Dorsolateral prefrontal cortex (tissue), 120 donors: ENCODE measurements at regions of chr16 and their contacts with region 1.

Region 1: GRCh38 chr16:19521471-19522396 is at the start of gene GDE1:
- DNase-seq: peak; percentile 98 to 99 (median 98)
- H3K4me3 ChIP-seq: peak within 1 kb of the TSS; percentile 50 to 99 (median 92)
- H3K27ac ChIP-seq: peak within 1 kb of the TSS; percentile 18 to 99 (median 89)
- H3K27me3 ChIP-seq: no peaks in the 10 kb centered on the region
- CTCF ChIP-seq: peak in 49 of 56 donors; percentile 18 to 70 (median 48)
- total RNA-seq, gene GDE1: 35.8 to 104 (median 76.3) TPM

Region 2: GRCh38 chr16:18789850-18790724 is 731.6 kb before region 1 on chr16 and contains the start of gene RPS15A:
- intact Hi-C with region 1: loop called in 1 of 2 experiments (anchors 10 kb)
- DNase-seq: peak; percentile 84 to 95 (median 92)
- H3K4me3 ChIP-seq: peak within 1 kb of the TSS; percentile 63 to 99 (median 94)
- H3K27ac ChIP-seq: peak within 1 kb of the TSS in 57 of 59 donors; percentile 41 to 96 (median 83)
- H3K27me3 ChIP-seq: no peaks in the 10 kb centered on the region
- CTCF ChIP-seq: peak in 33 of 56 donors; percentile 4 to 53 (median 32)
- total RNA-seq, gene RPS15A: 167 to 354 (median 232) TPM